Endothelial cell of umbilical vein (primary cell): ENCODE measurements at regions of chr5 and their contacts with region 1.

Region 1: DNA sequence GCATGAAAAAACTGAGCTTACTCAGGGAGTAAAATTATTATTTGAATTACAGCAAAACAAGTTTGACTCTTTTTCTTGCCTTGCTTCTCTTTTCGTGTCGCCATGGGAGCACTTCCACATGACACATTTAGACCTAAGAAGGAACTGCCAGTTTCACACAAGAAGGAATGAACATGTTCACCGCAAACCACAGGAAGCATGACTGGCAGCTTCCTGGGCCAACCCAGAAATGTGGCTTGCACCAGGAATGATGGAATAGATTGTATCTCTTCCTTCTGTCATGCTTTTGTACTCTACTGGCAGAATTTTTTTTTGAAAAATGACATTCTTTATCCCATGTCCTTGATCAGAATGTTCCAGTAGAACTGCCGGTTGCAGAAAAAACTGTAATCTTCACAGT is 32.9 kb upstream of the MAN2A1 start:
- DNase-seq: peak; percentile 60
- H3K4me3 ChIP-seq: no peak overlapping the region
- H3K27ac ChIP-seq: peak overlapping the region; percentile 80
- H3K4me1 ChIP-seq: peaks cover 16% of the 10 kb centered on the region
- H3K27me3 ChIP-seq: no peaks in the 10 kb centered on the region
- CTCF ChIP-seq: no peak
- POLR2A ChIP-seq: no peak

Region 2: GRCh38 chr5:108661590-108662219 is 995.1 kb before region 1 on chr5:
- CTCF ChIA-PET with region 1: no interaction called
- POLR2A ChIA-PET with region 1: no interaction called
- dilution Hi-C with region 1: no loop called
- intact Hi-C with region 1: loop called (anchors 5 kb)
- DNase-seq: peak; percentile 72
- H3K4me3 ChIP-seq: no peak overlapping the region
- H3K27ac ChIP-seq: peak overlapping the region; percentile 71
- H3K4me1 ChIP-seq: peaks cover 13% of the 10 kb centered on the region
- H3K27me3 ChIP-seq: no peaks in the 10 kb centered on the region
- CTCF ChIP-seq: no peak
- POLR2A ChIP-seq: no peak

Region 3: DNA sequence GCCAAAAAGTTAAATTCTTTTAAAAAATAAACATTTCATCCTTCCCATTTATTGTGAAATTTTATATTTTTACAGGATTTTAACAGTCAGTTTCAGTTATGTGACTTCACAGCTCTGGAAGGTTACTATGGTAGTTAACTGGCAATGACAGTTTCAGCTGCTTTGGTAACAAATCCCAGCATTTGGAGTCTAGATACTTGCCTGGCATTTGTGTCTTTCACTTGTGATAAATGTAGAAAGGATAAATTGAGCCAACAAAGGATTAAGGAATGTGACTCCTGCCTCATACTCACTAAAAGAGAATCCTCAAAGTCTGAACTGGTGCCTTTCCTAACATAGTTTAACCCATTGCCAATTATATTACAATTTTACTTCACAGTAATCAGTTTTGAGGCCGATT is 593.6 kb before region 1 on chr5:
- CTCF ChIA-PET with region 1: no interaction called
- POLR2A ChIA-PET with region 1: no interaction called
- dilution Hi-C with region 1: no loop called
- intact Hi-C with region 1: no loop called
- DNase-seq: no peak
- H3K4me3 ChIP-seq: no peak overlapping the region
- H3K27ac ChIP-seq: no peak overlapping the region
- H3K4me1 ChIP-seq: no peaks in the 10 kb centered on the region
- H3K27me3 ChIP-seq: no peaks in the 10 kb centered on the region
- CTCF ChIP-seq: no peak
- POLR2A ChIP-seq: no peak

Region 4: DNA sequence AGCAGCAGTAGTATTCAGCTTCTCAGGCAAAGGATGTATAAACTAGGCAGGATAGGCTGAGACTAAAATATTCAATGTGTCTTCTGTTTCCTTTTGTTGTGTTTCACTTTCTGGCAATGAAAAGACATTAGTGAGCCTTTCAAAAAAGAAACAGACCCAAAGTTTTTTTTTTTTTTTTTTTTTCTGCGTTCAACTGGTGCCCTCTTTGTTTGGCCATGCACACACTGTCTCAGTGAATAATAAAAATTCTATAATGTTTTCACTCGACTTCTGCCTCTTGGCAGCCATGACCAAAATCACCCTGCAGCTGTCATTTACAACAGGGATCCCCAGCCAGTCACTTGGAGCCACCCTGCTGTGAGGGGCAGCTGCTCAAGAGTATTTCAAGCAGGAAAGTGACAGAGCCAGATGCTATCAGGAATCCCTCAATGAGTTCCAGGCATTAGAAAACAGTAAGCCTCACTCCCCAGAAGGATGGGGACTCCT is 11.1 kb before region 1 on chr5:
- CTCF ChIA-PET with region 1: no interaction called
- POLR2A ChIA-PET with region 1: no interaction called
- dilution Hi-C with region 1: no loop called
- intact Hi-C with region 1: no loop called
- DNase-seq: no peak
- H3K4me3 ChIP-seq: no peak overlapping the region
- H3K27ac ChIP-seq: no peak overlapping the region
- H3K4me1 ChIP-seq: no peaks in the 10 kb centered on the region
- H3K27me3 ChIP-seq: peaks cover 0 to 2% of the 10 kb centered on the region in 2 experiments
- CTCF ChIP-seq: no peak
- POLR2A ChIP-seq: no peak

Region 5: DNA sequence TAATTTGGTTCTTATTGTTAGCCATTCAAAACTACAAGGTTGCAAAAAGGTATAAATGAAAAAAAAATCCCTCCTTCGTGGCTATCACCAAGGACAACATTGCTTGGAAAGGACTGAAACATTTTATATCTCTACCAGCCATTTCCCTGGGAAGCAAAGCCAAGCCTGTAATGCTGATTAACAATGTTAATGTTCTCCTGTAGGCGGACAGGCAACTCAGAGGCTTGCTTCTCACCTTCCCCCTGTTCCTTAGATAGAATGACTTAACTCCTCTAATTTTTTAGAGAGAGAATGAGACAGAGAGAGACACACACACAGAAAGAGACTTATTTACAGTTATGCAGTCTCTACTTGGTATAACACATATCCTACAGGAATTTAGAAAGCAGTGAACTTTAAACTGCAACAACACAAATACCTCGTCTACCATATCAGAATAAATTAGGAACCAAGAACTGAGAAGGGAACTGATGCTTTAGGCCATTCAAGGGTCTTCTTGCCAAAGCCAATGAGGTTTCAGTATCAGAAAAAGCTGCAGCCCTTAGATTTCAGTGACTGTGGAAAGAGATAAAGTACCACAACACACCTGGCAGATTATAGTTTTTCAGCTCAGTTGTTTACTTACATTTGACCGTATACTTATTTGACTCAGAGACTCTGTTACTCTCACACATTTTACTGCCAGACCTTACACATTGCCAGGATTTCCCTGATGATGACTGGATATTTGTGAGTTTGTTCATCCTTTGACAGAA is 12.0 kb after region 1 on chr5:
- CTCF ChIA-PET with region 1: no interaction called
- POLR2A ChIA-PET with region 1: no interaction called
- dilution Hi-C with region 1: no loop called
- intact Hi-C with region 1: loop called (anchors 1 kb)
- DNase-seq: peak; percentile 6
- H3K4me3 ChIP-seq: no peak overlapping the region
- H3K27ac ChIP-seq: peak overlapping the region; percentile 9
- H3K4me1 ChIP-seq: peaks cover 17% of the 10 kb centered on the region
- H3K27me3 ChIP-seq: no peaks in the 10 kb centered on the region
- CTCF ChIP-seq: no peak
- POLR2A ChIP-seq: no peak

Region 6: GRCh38 chr5:109759306-109759705 is 102.5 kb after region 1 on chr5:
- CTCF ChIA-PET with region 1: no interaction called
- POLR2A ChIA-PET with region 1: no interaction called
- dilution Hi-C with region 1: no loop called
- intact Hi-C with region 1: loop called (anchors 1 kb)
- DNase-seq: peak; percentile 89
- H3K4me3 ChIP-seq: peak overlapping the region in 1 of 3 experiments; percentile 32
- H3K27ac ChIP-seq: peak overlapping the region; percentile 67
- H3K4me1 ChIP-seq: peaks cover 10% of the 10 kb centered on the region
- H3K27me3 ChIP-seq: no peaks in the 10 kb centered on the region
- CTCF ChIP-seq: no peak
- POLR2A ChIP-seq: no peak